IMR-90 (cell line): ENCODE measurements at regions of chr2 and their contacts with region 1.

Region 1: DNA sequence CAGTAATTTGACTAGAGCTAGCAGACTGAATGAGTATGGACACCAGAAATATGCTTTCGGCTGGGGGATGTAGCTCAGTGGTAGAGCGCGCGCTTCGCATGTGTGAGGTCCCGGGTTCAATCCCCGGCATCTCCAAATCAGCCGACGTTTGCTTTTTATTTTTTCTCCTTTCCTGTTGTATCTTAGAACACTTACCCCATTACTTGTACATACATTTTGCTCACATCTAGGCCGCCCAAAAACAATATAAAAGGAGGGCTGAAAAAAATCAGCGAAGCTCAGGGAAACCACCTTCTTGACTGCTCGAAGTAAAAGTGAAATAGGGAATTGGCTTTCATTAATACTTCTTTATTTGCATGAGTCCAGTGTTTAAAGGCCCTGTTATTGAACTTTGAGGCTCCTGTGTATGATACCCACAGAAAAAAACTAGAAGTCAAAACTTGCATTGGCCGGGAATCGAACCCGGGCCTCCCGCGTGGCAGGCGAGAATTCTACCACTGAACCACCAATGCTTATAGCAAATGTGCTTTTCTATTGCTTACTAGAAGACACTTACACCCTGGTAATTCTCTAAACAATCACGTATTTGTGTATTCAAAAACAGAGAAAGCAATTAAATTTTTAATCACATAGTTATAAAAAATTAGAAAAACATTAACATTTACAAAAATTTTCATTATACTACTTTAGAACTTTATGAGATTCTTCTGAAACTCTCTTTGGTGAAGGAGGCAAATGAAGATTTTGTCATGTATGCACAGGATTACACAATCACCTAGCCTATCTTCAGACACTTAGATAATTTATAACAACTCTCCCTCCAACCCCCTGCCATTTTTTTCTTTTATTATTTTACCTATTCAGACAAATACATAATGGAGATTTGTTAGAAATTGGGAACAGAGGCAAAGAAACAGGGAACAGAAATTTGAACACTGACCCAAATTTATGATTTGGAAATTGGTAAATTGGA is 35.2 kb upstream of the GPD2 start:
- DNase-seq: peak; percentile 85
- ATAC-seq: peak; percentile 92
- H3K4me3 ChIP-seq: peak overlapping the region; percentile 55
- H3K27ac ChIP-seq: no peak overlapping the region
- H3K4me1 ChIP-seq: peaks cover 5% of the 10 kb centered on the region
- H3K27me3 ChIP-seq: peaks cover 8% of the 10 kb centered on the region; the same call in 1 of the 2 replicates
- CTCF ChIP-seq: no peak
- POLR2A ChIP-seq: no peak
- RAD21 ChIP-seq: no peak

Region 2: GRCh38 chr2:155917380-155917779 is 483.6 kb before region 1 on chr2:
- CTCF ChIA-PET with region 1: no interaction called
- POLR2A ChIA-PET with region 1: no interaction called
- dilution Hi-C with region 1: no loop called
- in situ Hi-C with region 1: no loop called
- intact Hi-C with region 1: no loop called
- DNase-seq: no peak
- ATAC-seq: no peak
- H3K4me3 ChIP-seq: no peak overlapping the region
- H3K27ac ChIP-seq: no peak overlapping the region
- H3K4me1 ChIP-seq: no peaks in the 10 kb centered on the region
- H3K27me3 ChIP-seq: no peaks in the 10 kb centered on the region
- CTCF ChIP-seq: no peak
- POLR2A ChIP-seq: no peak
- RAD21 ChIP-seq: no peak

Region 3: DNA sequence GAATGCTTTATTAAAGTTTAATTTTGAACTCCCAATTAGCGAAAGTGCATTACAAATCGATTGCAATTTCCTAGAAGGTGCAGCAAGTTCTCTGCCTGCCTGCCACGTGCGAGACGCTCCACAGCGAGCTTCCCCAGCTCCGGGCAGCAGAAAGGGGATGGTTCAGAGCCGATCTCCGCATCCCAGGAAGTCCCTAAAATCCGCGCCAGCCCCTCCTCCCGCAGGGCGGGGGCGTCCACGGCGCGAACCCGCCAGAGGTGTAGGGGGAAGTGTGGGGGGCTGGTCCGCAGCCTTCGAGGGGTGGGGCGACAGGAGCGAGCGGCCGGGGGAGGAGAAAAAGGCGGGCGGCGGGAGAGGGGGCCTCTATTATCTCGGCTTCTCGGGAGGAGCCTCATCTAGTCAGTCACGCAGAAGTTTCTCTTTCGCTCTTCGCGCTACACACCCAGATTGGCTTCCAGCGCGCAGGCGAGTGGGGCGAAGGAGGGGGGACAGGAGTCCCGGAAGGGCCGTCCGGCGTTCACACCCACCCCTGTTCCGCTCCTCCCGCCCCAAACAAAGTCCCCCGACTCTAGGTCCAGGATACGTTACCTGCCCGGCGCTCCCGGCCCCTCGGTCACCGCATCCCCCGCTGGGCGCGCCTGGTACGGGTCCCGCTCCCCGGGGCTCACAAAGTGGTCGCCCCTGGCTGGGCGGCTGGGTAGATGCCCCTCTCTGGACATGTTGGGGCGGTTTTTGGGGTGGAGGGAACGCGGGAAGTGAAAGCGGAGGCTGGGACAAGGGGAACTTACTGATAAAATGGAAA is 59.3 kb before region 1 on chr2:
- CTCF ChIA-PET with region 1: no interaction called
- POLR2A ChIA-PET with region 1: no interaction called
- dilution Hi-C with region 1: no loop called
- in situ Hi-C with region 1: loop called (anchors 5 kb)
- intact Hi-C with region 1: loop called (anchors 2 kb)
- DNase-seq: peak; percentile 94
- ATAC-seq: peak; percentile 85
- H3K4me3 ChIP-seq: peak overlapping the region; percentile 85
- H3K27ac ChIP-seq: peak overlapping the region; percentile 96
- H3K4me1 ChIP-seq: no peaks in the 10 kb centered on the region
- H3K27me3 ChIP-seq: no peaks in the 10 kb centered on the region
- CTCF ChIP-seq: no peak
- POLR2A ChIP-seq: peak; percentile 94
- RAD21 ChIP-seq: peak; percentile 18; the same call in 1 of the 2 replicates

Region 4: DNA sequence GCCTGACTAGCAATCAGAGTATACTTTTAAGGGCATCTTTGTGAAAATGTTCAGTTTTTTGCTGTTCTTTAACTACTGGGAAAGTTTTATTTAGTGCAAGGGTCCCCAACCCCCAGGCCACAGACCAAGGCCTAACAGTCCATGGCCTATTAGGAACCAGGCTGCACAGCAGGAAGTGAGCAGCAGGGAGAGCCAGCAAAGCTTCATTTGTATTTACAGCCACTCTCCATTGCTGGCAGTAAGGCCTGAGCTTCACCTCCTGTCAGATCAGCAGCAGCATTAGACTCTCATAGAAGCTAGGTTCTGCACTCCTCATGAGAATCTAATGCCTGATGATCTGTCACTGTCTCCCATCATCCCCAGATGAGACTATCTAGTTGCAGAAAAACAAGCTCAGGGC is 51.4 kb before region 1 on chr2:
- CTCF ChIA-PET with region 1: no interaction called
- POLR2A ChIA-PET with region 1: no interaction called
- dilution Hi-C with region 1: no loop called
- in situ Hi-C with region 1: loop called (anchors 5 kb)
- intact Hi-C with region 1: no loop called
- DNase-seq: no peak
- ATAC-seq: no peak
- H3K4me3 ChIP-seq: no peak overlapping the region
- H3K27ac ChIP-seq: no peak overlapping the region
- H3K4me1 ChIP-seq: no peaks in the 10 kb centered on the region
- H3K27me3 ChIP-seq: no peaks in the 10 kb centered on the region
- CTCF ChIP-seq: no peak
- POLR2A ChIP-seq: no peak
- RAD21 ChIP-seq: no peak

Region 5: GRCh38 chr2:156435715-156436496 is 34.9 kb after region 1 on chr2 and contains the start of gene GPD2:
- CTCF ChIA-PET with region 1: interaction called, 4 read pairs
- POLR2A ChIA-PET with region 1: interaction called, 3 read pairs
- dilution Hi-C with region 1: no loop called
- in situ Hi-C with region 1: no loop called
- intact Hi-C with region 1: loop called (anchors 1 kb)
- DNase-seq: peak; percentile 82
- ATAC-seq: peak; percentile 95
- H3K4me3 ChIP-seq: peak within 1 kb of the TSS; percentile 72
- H3K27ac ChIP-seq: peak within 1 kb of the TSS; percentile 96
- H3K4me1 ChIP-seq: peaks cover 17% of the 10 kb centered on the region
- H3K27me3 ChIP-seq: no peaks in the 10 kb centered on the region
- CTCF ChIP-seq: no peak
- POLR2A ChIP-seq: peak; percentile 55; the same call in 1 of the 2 replicates
- RAD21 ChIP-seq: no peak
- total RNA-seq, gene GPD2: 100 and 153 TPM in 2 replicates

Region 6: GRCh38 chr2:156511803-156512202 is 110.8 kb after region 1 on chr2:
- CTCF ChIA-PET with region 1: no interaction called
- POLR2A ChIA-PET with region 1: no interaction called
- dilution Hi-C with region 1: no loop called
- in situ Hi-C with region 1: no loop called
- intact Hi-C with region 1: loop called (anchors 10 kb)
- DNase-seq: no peak
- ATAC-seq: no peak
- H3K4me3 ChIP-seq: no peak overlapping the region
- H3K27ac ChIP-seq: no peak overlapping the region
- H3K4me1 ChIP-seq: peaks cover 6% of the 10 kb centered on the region
- H3K27me3 ChIP-seq: no peaks in the 10 kb centered on the region
- CTCF ChIP-seq: no peak
- POLR2A ChIP-seq: no peak
- RAD21 ChIP-seq: no peak

Region 7: GRCh38 chr2:156589381-156590079 is 188.5 kb after region 1 on chr2:
- CTCF ChIA-PET with region 1: no interaction called
- POLR2A ChIA-PET with region 1: no interaction called
- dilution Hi-C with region 1: no loop called
- in situ Hi-C with region 1: no loop called
- intact Hi-C with region 1: loop called (anchors 2 kb)
- DNase-seq: peak; percentile 62
- ATAC-seq: peak; percentile 74
- H3K4me3 ChIP-seq: no peak overlapping the region
- H3K27ac ChIP-seq: no peak overlapping the region
- H3K4me1 ChIP-seq: no peaks in the 10 kb centered on the region
- H3K27me3 ChIP-seq: no peaks in the 10 kb centered on the region
- CTCF ChIP-seq: peak; percentile 72
- POLR2A ChIP-seq: no peak
- RAD21 ChIP-seq: peak; percentile 85

Region 8: GRCh38 chr2:157173740-157174184 is 772.8 kb after region 1 on chr2:
- CTCF ChIA-PET with region 1: no interaction called
- POLR2A ChIA-PET with region 1: no interaction called
- dilution Hi-C with region 1: no loop called
- in situ Hi-C with region 1: no loop called
- intact Hi-C with region 1: loop called (anchors 5 kb)
- DNase-seq: peak; percentile 100
- ATAC-seq: peak; percentile 89
- H3K4me3 ChIP-seq: no peak overlapping the region
- H3K27ac ChIP-seq: peak overlapping the region; percentile 16; the same call in 1 of the 2 replicates
- H3K4me1 ChIP-seq: peaks cover 9% of the 10 kb centered on the region
- H3K27me3 ChIP-seq: no peaks in the 10 kb centered on the region
- CTCF ChIP-seq: no peak
- POLR2A ChIP-seq: no peak; the same call in 1 of the 2 replicates
- RAD21 ChIP-seq: 0 out of 2 replicates have a peak, but pooled peaks have one; percentile 2